RWPE1 (cell line): ENCODE measurements at regions of chr3 and their contacts with region 1.

Region 1: GRCh38 chr3:61761694-61762430 is 200.5 kb downstream of the PTPRG start:
- DNase-seq: no peak
- H3K27ac ChIP-seq: no peak overlapping the region
- CTCF ChIP-seq: no peak

Region 2: DNA sequence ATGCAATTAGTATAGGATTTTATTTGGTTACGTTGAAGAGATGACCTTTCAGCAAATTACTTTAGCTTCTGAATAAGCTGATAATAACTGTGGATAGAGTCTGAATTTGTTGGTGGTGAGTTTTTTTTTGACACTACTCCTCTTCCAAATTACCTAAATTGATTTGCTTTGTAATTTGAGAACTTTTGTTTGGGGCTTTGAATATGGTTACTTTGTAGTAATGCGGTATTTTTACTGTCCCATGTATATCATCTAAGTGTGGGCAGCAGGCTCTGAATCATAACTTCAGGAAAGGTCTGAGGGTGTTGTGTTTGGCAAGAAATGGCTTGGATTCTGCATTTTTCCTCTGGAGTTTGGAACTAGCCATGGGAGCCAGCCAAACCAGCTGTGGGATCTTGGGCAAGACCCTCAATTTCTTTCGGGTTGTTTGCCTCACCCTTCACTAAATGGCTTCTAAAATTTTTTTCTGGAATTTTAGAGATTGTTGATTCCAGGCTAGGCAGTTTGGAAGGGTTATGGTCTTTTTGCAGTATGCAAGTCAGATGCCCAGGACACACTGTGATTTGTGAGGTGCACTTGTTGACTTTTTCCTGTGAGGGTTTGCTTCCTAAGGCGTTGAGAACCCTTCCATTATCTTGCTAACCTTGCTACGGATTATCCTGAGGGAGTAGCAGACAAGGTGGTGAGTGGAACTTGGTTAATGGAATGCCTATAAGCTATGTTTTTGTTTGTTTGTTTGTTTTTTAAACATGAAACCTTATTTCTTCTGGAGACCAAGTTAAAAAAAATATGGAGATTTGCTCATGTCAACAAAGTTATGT is 190.1 kb before region 1 on chr3:
- CTCF ChIA-PET with region 1: no interaction called
- POLR2A ChIA-PET with region 1: no interaction called
- DNase-seq: no peak
- H3K27ac ChIP-seq: no peak overlapping the region
- CTCF ChIP-seq: no peak

Region 3: DNA sequence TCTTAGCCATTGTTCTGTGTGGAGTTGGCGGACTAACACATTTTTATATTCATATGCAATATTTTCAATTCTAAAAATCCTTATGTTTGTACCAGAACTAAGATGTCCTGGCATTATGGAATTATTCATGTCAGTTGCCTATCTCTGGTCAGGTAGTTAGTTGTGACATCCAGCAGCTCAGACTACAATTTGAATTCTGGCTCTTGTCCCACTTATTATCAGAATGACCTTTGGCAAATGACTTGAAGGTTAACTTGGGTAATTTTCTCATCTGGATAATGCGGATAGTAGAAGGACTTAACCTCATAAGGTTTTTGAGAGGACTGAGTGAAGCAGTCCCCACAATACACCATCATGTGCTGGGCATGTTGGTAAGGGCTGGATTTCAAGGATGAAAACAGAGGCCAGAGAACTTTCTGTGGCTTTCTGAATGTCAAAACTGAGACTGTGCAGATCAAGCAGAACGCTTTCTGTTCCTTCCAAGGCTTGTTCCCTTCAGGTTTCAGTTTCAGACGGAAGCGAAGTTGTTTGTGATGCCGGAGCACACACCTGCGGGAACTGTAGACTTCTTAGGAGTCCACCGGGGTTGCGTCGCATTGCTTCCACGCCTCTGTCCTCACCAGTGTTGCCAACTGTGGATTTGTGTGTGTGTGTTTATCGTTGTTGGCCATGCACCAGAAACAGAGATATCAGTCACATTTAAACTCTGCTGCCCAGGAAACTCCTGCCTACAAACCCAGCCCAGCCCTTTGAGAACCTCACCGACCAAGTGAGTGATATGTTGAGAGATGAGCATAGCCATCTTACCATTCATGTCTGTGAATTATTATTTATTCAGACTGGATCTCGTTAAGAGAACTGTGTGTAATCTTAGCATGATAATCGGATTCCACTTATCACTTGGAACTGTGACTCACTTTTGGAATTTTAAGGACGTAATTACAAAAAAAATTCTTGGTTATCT is 124.5 kb before region 1 on chr3:
- CTCF ChIA-PET with region 1: no interaction called
- POLR2A ChIA-PET with region 1: interaction called, 11 read pairs
- DNase-seq: no peak
- H3K27ac ChIP-seq: no peak overlapping the region
- CTCF ChIP-seq: no peak

Region 4: DNA sequence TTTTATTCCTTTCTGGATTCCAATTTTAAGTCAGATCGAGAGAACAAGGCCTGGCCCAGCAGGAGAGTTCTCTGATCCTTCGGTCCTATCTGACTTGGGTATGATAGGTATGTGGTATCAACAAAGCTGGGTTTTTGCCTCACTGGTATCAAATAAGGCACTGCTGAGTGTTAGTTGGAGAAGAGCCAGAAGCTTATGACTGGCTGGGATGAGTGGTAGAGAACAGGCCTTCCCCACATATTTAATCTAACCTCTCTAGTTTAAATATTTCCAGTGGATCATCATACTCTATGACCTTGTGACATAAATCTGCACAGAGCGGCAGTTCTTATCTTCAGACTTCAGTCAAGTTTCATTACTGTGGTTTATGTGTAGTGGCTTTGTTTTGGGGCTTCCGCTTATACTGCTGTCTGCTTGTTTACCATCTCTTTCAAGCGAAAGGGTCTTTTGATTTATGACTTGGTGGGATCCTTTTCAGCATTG is 36.0 kb before region 1 on chr3:
- CTCF ChIA-PET with region 1: no interaction called
- POLR2A ChIA-PET with region 1: no interaction called
- DNase-seq: no peak
- H3K27ac ChIP-seq: no peak overlapping the region
- CTCF ChIP-seq: no peak

Region 5: DNA sequence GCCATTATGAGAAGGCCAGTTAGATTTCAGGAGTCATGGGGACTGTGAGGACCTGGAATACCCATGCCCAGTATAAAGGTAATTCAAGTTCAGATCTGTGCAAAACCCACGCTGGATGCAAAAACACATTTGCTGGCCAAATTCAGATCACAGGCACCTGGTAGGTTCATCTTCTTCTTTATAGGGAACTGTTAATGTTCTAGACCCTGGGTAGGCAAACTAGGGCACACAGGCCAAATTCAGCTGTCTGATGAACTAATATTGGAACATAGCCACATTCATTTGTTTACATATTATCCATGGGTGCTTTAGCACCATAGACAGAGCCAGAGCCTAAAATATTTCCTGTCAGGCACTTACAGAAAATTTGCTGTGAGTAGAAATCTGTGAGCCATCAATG is 40.9 kb after region 1 on chr3:
- CTCF ChIA-PET with region 1: no interaction called
- POLR2A ChIA-PET with region 1: no interaction called
- DNase-seq: no peak
- H3K27ac ChIP-seq: no peak overlapping the region
- CTCF ChIP-seq: no peak